ENCODE measurements at regions of chr17 and their contacts with region 1.

Region 1: DNA sequence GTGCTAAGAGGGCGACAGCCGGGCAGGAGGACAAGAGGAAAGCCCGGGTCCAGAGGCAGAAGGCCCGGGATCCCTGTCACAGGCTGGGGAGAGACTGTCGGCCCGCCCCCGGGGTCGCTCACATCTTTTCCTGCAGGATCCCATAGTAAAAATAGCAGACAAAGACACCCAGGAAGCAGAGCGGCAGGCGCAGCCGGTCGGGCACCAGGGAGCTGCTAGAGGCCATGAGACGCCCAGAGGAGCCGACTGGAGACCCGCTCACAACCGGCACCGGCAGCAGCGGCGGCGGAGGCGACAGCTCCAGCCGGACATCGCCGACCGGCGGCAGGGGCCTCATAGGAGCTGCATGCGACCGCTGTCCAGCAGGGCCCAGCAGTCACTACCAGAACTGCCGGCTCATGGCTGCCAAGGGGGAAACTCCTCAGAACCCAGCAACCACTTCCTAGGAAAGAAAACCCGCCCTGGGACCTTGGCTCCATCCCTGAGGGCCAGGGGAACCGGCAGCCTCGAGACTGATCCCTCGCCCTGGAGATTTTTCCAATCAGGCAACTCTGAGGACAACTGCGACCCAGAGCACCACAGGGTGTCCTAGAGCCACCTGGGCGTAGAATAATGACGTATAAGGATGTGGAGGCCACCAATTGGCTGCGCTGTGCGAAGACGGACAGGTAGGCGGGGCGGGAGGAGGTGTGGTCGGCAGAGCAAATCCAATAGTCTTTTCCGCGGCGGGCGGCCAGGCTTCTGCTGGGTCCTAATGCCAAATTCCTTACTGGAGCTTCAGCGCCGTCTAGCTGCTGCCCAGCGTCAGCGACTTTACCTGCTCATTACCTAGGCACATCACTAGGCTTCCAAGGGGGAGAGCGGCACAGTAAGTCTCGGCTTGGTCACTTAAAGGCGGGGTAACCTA is at the start of gene SLC35B1:
- DNase-seq: peak; percentile 99
- H3K4me3 ChIP-seq: peak within 1 kb of the TSS; percentile 85 to 97
- H3K27ac ChIP-seq: peak within 1 kb of the TSS; percentile 80 to 99
- H3K4me1 ChIP-seq: peaks cover 8 to 17% of the 10 kb centered on the region in 2 experiments; a peak in 2 of 4 replicates
- H3K27me3 ChIP-seq: no peaks in the 10 kb centered on the region
- CTCF ChIP-seq: peak; percentile 99
- EP300 ChIP-seq: peak in 1 of 2 experiments; percentile 36; a peak in 1 of 4 replicates
- RAD21 ChIP-seq: peak; percentile 69
- polyA plus RNA-seq, gene SLC35B1: 89.8 and 109 TPM in 2 replicates

Region 2: DNA sequence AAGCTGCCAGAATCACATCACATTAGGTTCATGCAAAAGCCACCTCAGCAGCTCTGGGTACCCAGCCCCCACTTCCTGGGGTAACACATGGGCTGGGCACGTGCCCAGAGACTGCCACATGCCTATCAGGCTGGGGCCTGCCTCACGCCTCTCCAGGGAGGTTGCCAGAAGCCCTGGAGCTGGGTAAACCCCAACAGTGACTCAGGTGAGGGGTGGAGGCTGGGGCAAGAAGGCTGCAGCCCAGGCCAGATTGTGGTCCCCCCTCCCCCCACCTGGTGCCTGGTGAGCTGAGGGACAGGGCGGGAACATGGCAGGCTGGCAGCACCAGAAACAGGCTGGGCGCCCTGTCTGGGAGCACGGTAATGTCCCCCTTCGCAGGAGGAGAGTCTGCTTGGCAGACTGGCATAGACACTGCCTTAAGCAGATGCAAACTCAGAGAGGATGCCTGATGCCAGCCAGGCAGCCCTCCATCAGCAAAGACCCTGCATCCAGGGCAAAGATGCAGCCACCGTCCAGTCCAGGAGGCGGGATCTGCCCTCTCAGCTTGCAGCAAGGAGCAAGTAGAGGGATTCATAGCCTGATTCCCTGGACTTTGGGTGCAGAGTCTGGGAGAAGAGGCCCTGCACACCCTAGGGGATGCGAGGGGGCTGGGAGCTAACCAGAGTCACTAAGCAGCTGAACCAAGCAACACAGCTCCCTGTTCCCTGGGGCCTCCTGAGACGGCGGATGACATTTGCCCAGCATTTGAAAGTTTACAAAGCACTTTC is 184.0 kb before region 1 on chr17:
- CTCF ChIA-PET with region 1: no interaction called
- POLR2A ChIA-PET with region 1: no interaction called
- DNase-seq: peak; percentile 56
- H3K4me3 ChIP-seq: no peak overlapping the region
- H3K27ac ChIP-seq: peak overlapping the region in 1 of 2 experiments; percentile 66; a peak in 1 of 4 replicates
- H3K4me1 ChIP-seq: peaks cover 0 to 63% of the 10 kb centered on the region in 2 experiments; a peak in 1 of 4 replicates
- H3K27me3 ChIP-seq: peaks cover 8% of the 10 kb centered on the region; the same call in 1 of the 2 replicates
- CTCF ChIP-seq: no peak
- EP300 ChIP-seq: no peak
- RAD21 ChIP-seq: no peak

Region 3: GRCh38 chr17:49694847-49695683 is 12.8 kb before region 1 on chr17:
- CTCF ChIA-PET with region 1: interaction called, 95 read pairs
- POLR2A ChIA-PET with region 1: interaction called, 6 read pairs
- DNase-seq: peak; percentile 82
- H3K4me3 ChIP-seq: no peak overlapping the region; a peak in 1 of 4 replicates
- H3K27ac ChIP-seq: no peak overlapping the region
- H3K4me1 ChIP-seq: peaks cover 0 to 2% of the 10 kb centered on the region in 2 experiments; a peak in 1 of 4 replicates
- H3K27me3 ChIP-seq: no peaks in the 10 kb centered on the region
- CTCF ChIP-seq: peak; percentile 100
- EP300 ChIP-seq: no peak
- RAD21 ChIP-seq: peak; percentile 98

Region 4: GRCh38 chr17:49723423-49723822 is 15.6 kb after region 1 on chr17:
- CTCF ChIA-PET with region 1: interaction called, 35 read pairs
- POLR2A ChIA-PET with region 1: interaction called, 3 read pairs
- DNase-seq: no peak
- H3K4me3 ChIP-seq: no peak overlapping the region
- H3K27ac ChIP-seq: no peak overlapping the region
- H3K4me1 ChIP-seq: no peaks in the 10 kb centered on the region
- H3K27me3 ChIP-seq: no peaks in the 10 kb centered on the region
- CTCF ChIP-seq: no peak
- EP300 ChIP-seq: no peak
- RAD21 ChIP-seq: no peak

Region 5: GRCh38 chr17:49730078-49730784 is 22.4 kb after region 1 on chr17:
- CTCF ChIA-PET with region 1: interaction called, 12 read pairs
- POLR2A ChIA-PET with region 1: interaction called, 3 read pairs
- DNase-seq: no peak
- H3K4me3 ChIP-seq: no peak overlapping the region
- H3K27ac ChIP-seq: no peak overlapping the region
- H3K4me1 ChIP-seq: peaks cover 0 to 4% of the 10 kb centered on the region in 2 experiments; a peak in 1 of 4 replicates
- H3K27me3 ChIP-seq: no peaks in the 10 kb centered on the region
- CTCF ChIP-seq: no peak
- EP300 ChIP-seq: no peak
- RAD21 ChIP-seq: no peak

Region 6: GRCh38 chr17:49763735-49764558 is 56.1 kb after region 1 on chr17 and contains the start of gene FAM117A:
- CTCF ChIA-PET with region 1: interaction called, 20 read pairs
- POLR2A ChIA-PET with region 1: interaction called, 13 read pairs
- DNase-seq: peak; percentile 100
- H3K4me3 ChIP-seq: peak within 1 kb of the TSS; percentile 57 to 67
- H3K27ac ChIP-seq: peak within 1 kb of the TSS in 1 of 2 experiments; percentile 30; a peak in 2 of 4 replicates
- H3K4me1 ChIP-seq: peaks cover 0 to 13% of the 10 kb centered on the region in 2 experiments; a peak in 2 of 4 replicates
- H3K27me3 ChIP-seq: no peaks in the 10 kb centered on the region
- CTCF ChIP-seq: no peak
- EP300 ChIP-seq: no peak
- RAD21 ChIP-seq: no peak
- polyA plus RNA-seq, gene FAM117A: 7.8 and 9.0 TPM in 2 replicates

Region 7: GRCh38 chr17:49788478-49789242 is 80.8 kb after region 1 on chr17 and contains the start of gene KAT7:
- CTCF ChIA-PET with region 1: interaction called, 7 read pairs
- POLR2A ChIA-PET with region 1: interaction called, 15 read pairs
- DNase-seq: peak; percentile 98
- H3K4me3 ChIP-seq: peak within 1 kb of the TSS; percentile 92 to 99
- H3K27ac ChIP-seq: peak within 1 kb of the TSS; percentile 96 to 97
- H3K4me1 ChIP-seq: peaks cover 13 to 16% of the 10 kb centered on the region in 2 experiments
- H3K27me3 ChIP-seq: no peaks in the 10 kb centered on the region
- CTCF ChIP-seq: no peak
- EP300 ChIP-seq: no peak
- RAD21 ChIP-seq: no peak
- polyA plus RNA-seq, gene KAT7: 18.5 and 20.2 TPM in 2 replicates